ENCODE measurements at regions of chr2 and their contacts with region 1.

Region 1: GRCh38 chr2:149004836-149005235 is 33.7 kb upstream of the LYPD6B start:
- DNase-seq: peak; percentile 65
- H3K4me3 ChIP-seq: no peak overlapping the region
- H3K27me3 ChIP-seq: peaks cover 7% of the 10 kb centered on the region
- CTCF ChIP-seq: no peak

Region 2: DNA sequence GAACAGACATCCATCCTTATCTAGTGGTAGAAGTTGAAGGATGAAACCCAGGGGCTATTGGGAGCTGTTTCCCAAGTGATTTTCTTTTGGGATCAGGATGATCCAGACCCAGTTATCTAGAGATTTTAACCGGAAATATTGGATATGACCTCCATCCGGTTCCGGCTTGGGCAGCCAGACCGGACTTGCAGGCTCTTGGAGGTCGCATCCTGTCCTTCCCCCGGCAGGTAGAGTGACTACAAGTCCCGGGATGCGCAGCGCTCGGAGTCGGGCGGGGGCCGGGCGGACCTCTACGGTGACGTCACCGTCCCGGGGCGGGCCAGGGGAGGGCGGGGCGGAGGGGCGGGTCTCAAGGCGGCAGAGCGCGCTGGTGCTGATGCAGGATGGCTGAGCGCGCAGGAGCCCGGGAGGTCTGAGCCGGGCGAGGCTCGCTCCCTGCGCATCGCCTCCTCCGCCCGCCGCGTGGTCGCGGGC is 129.9 kb before region 1 on chr2 and contains the start of gene KIF5C:
- CTCF ChIA-PET with region 1: no interaction called
- POLR2A ChIA-PET with region 1: no interaction called
- DNase-seq: no peak
- H3K4me3 ChIP-seq: peak within 1 kb of the TSS; percentile 28
- H3K27me3 ChIP-seq: peaks cover 21% of the 10 kb centered on the region
- CTCF ChIP-seq: no peak
- polyA plus RNA-seq, gene KIF5C: 0.17 and 0.23 TPM in 2 replicates

Region 3: DNA sequence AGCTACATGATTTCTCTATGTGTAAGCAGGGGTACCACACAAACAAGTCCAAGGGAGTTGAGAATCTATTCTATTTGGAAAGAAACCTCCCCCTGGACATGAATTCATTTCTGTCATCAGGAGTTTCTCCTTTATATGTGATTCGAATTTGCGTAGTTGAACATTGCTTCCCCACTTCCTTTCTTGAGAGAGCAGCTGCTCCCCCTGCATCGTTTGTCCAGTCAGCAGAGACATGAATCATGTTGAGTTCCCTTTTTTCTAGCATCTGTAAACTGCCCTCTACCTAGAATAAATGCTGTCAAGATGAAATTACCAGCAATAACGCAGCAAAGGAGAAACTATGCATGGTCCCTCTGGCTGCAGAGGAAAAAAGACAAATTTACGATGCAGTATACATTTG is 56.0 kb before region 1 on chr2:
- CTCF ChIA-PET with region 1: no interaction called
- POLR2A ChIA-PET with region 1: no interaction called
- DNase-seq: no peak
- H3K4me3 ChIP-seq: no peak overlapping the region
- H3K27me3 ChIP-seq: no peaks in the 10 kb centered on the region; the same call in 1 of the 2 replicates
- CTCF ChIP-seq: no peak

Region 4: DNA sequence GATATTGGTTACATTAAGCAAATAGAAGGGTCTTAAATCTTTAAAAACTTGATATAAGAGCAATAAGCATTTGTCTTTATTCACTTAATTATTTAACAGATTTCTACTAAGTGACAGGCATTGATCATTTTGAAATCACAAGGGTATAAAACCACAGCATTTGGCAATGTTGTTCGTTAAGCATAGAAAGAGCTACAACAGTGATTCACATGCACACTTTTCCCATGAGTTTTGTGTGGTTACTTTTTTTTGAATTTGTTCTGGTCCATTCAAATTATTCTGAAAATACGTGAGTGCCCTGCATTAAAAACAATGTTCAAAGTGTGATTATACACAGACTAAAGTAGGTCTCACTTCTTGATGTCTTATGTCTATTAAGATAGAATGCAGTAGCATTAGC is 85.9 kb after region 1 on chr2:
- CTCF ChIA-PET with region 1: no interaction called
- POLR2A ChIA-PET with region 1: interaction called, 22 read pairs
- DNase-seq: no peak
- H3K4me3 ChIP-seq: no peak overlapping the region
- H3K27me3 ChIP-seq: no peaks in the 10 kb centered on the region
- CTCF ChIP-seq: no peak

Region 5: GRCh38 chr2:149167411-149167810 is 162.6 kb after region 1 on chr2:
- CTCF ChIA-PET with region 1: no interaction called
- POLR2A ChIA-PET with region 1: no interaction called
- DNase-seq: no peak
- H3K4me3 ChIP-seq: no peak overlapping the region
- H3K27me3 ChIP-seq: no peaks in the 10 kb centered on the region
- CTCF ChIP-seq: no peak

Region 6: GRCh38 chr2:149383340-149383739 is 378.5 kb after region 1 on chr2:
- CTCF ChIA-PET with region 1: no interaction called
- POLR2A ChIA-PET with region 1: no interaction called
- DNase-seq: peak; percentile 79
- H3K4me3 ChIP-seq: no peak overlapping the region
- H3K27me3 ChIP-seq: no peaks in the 10 kb centered on the region
- CTCF ChIP-seq: no peak

Measured in BJ (cell line).